PC-3 (cell line): ENCODE measurements at regions of chr14 and their contacts with region 1.

Region 1: DNA sequence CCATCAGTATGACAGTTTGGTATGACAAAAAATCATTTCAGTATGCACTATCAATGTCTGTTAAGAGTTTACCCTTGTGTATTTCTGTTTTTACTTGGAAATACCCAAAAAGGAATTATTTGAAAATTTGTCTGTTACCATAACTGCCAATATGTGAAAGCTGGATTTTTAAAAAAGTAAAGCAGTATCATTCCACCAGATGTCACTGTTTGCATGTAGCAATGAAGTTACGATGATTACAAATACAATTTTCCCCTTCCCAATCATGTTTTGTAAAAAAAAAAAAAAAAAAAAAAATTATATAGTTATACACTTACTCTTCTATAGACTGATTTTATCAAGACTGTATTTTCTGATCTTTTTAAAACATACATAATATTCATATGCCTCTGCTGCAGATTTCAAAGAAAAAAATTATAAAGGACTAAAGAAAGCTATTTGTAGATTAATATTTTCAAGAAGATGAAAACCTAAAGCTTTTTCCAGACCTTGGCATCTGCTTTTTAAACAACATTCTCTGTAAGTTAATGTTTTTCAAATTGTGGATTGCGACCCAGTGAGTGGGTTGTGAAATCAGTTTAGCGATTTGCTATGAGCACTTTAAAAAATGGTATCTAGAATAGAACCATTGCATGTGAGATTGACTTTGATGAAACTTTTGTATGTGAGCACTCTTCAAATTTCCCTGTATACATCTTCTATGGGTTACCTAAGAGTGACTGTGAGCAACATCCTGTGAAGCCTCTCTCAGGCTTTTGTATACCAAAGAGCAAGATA is 114.2 kb downstream of the TTC6 start:
- DNase-seq: peak; percentile 63
- ATAC-seq: no peak
- H3K4me3 ChIP-seq: no peak overlapping the region
- H3K27ac ChIP-seq: no peak overlapping the region
- H3K4me1 ChIP-seq: peaks cover 20% of the 10 kb centered on the region
- H3K27me3 ChIP-seq: no peaks in the 10 kb centered on the region
- CTCF ChIP-seq: peak; percentile 62

Region 2: DNA sequence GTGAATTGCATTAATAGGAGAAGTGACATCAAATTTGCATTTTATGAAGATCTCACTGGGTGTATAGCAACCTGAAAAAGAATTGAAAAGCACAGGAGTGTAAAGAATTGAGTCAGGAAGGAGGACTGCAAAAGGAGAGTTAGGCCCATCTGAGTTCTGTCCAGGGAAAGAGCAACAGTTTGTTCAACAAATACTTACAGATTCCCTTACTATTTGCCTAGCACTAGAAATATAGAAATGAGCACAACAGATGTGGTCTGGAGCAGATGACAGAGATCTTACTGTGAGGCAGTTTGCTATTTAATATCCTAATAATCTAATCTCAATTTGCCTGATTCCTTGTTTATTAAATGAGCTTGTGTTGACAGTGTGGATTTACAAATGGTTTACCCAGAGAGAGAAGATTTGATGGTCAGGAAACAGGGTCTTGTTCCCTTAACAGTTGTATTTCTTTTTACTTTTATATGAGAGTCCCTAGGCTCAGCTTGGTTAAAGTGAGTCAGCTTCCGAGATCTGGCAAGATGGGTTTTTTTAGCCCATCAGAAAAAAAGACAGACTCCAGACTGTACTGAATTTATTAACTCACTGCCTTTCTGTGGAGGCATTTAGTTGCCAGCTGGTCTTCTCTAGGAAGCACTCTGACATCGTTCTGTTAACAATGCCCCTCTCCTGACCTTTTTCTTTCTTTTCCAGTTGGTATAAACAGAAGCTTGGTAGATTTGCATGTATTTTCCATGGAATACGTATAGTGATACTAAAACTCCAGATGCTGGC is 115.5 kb after region 1 on chr14:
- CTCF ChIA-PET with region 1: interaction called, 3 read pairs
- POLR2A ChIA-PET with region 1: no interaction called
- intact Hi-C with region 1: loop called (anchors 5 kb)
- DNase-seq: peak; percentile 55
- ATAC-seq: peak; percentile 66
- H3K4me3 ChIP-seq: no peak overlapping the region
- H3K27ac ChIP-seq: peak overlapping the region; percentile 10
- H3K4me1 ChIP-seq: peaks cover 33% of the 10 kb centered on the region
- H3K27me3 ChIP-seq: no peaks in the 10 kb centered on the region
- CTCF ChIP-seq: no peak

Region 3: GRCh38 chr14:37864861-37865718 is 155.5 kb after region 1 on chr14:
- CTCF ChIA-PET with region 1: interaction called, 11 read pairs
- POLR2A ChIA-PET with region 1: no interaction called
- intact Hi-C with region 1: no loop called
- DNase-seq: peak; percentile 62
- ATAC-seq: peak; percentile 95
- H3K4me3 ChIP-seq: no peak overlapping the region
- H3K27ac ChIP-seq: no peak overlapping the region
- H3K4me1 ChIP-seq: peaks cover 14% of the 10 kb centered on the region; the same call in 1 of the 2 replicates
- H3K27me3 ChIP-seq: no peaks in the 10 kb centered on the region
- CTCF ChIP-seq: no peak